Motor neuron (in vitro differentiated cells): ENCODE measurements at regions of chr6 and their contacts with region 1.

Region 1: GRCh38 chr6:30719791-30720737 is at the start of gene TUBB:
- ATAC-seq: peak; percentile 62 to 73 (median 66)
- H3K4me3 ChIP-seq: peak within 1 kb of the TSS; percentile 68 to 84 (median 76)
- H3K27ac ChIP-seq: peak within 1 kb of the TSS; percentile 94 to 96
- H3K4me1 ChIP-seq: peaks cover 23 to 30% of the 10 kb centered on the region in 2 donors
- total RNA-seq, gene TUBB: 425 to 1,850 (median 943) TPM

Region 2: GRCh38 chr6:30678964-30679726 is 40.9 kb before region 1 on chr6:
- in situ Hi-C with region 1: loop called in 1 of 9 experiments (anchors 5 kb)
- ATAC-seq: peak; percentile 45 to 90 (median 57)
- H3K4me3 ChIP-seq: peak overlapping the region in 2 of 5 donors; percentile 1 to 5
- H3K27ac ChIP-seq: no peak overlapping the region
- H3K4me1 ChIP-seq: peaks cover 35 to 37% of the 10 kb centered on the region in 2 donors